Psoas muscle (tissue), 8 donors: ENCODE measurements at regions of chr17 and their contacts with region 1.

Region 1: DNA sequence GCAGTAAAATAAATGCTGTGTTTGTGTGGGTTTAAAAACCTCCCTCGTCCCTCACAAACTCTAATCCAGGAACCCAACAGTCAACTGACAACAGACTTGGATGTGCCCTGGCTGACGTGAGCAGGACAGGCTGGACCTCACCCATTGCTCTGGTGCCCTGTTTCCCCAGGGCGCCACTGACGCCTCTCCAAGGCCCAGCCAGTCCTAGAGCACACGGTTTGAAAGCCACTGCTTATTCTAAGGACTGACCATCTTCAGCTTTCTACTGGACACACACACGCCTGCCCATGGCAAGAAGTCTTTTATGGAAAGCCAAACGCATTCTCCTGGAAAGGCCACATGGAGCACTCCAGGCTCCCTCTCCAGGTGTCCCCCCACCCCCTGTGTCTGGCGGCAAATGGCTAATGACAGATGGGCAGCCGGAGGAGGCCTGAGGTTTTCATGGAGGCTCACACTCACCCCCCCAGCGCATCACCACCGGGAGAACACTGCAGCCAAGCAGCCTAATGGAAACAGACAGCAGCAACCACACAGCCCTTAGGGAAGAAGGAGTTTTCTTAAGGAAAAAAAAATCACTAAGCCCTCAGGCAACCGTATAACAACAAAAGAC is 319.2 kb downstream of the SOX9 start:
- DNase-seq: no peak
- ATAC-seq: no peak
- H3K4me3 ChIP-seq: no peak overlapping the region
- H3K27ac ChIP-seq: no peak overlapping the region
- H3K4me1 ChIP-seq: no peaks in the 10 kb centered on the region
- H3K27me3 ChIP-seq: no peaks in the 10 kb centered on the region
- CTCF ChIP-seq: no peak

Region 2: DNA sequence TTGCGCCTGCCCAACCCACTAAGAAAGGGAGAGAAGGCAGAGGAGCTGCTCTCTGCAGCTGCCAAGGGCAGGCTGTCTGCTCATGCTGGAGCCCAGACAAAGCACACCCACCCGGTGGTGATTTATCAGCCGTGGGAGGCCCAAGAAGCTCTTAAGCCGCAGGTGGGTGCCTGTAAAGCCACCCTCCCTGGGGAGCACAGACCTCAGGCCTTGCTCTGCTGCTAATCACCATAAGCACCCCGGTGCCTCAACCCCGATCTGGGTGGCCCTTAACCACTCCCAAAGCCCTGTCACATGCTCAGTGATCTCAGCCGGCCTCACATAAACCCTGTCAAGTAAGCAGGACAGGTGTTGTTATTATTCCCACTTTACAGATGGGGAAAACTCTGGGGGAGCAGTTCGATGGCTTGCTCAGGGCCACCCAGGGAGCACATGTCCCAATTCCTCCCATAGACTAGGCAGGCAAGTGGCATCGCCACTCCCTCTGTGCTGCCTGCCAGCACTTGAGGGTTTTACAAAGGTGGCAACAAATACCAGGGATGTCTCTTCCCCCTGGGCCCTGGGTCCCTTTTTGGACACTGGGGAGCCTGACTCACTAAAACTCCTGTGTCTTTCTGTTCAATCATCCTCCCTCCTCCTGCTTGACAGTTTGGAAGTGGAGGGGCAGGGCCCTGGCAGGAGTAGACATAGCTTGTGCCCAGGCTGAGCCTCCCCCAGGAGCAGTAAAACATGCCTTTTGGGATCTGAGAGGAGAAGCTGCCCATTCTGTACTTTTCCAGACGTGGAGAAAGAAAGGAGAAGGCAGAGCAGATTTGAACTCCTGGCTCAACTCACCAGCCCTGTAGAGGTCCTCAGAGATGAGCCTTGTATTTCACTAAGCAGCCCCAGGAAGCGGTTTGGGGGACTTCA is 19.9 kb before region 1 on chr17:
- intact Hi-C with region 1: no loop called
- DNase-seq: no peak
- ATAC-seq: no peak
- H3K4me3 ChIP-seq: no peak overlapping the region
- H3K27ac ChIP-seq: no peak overlapping the region
- H3K4me1 ChIP-seq: peaks cover 5% of the 10 kb centered on the region
- H3K27me3 ChIP-seq: no peaks in the 10 kb centered on the region
- CTCF ChIP-seq: no peak

Region 3: DNA sequence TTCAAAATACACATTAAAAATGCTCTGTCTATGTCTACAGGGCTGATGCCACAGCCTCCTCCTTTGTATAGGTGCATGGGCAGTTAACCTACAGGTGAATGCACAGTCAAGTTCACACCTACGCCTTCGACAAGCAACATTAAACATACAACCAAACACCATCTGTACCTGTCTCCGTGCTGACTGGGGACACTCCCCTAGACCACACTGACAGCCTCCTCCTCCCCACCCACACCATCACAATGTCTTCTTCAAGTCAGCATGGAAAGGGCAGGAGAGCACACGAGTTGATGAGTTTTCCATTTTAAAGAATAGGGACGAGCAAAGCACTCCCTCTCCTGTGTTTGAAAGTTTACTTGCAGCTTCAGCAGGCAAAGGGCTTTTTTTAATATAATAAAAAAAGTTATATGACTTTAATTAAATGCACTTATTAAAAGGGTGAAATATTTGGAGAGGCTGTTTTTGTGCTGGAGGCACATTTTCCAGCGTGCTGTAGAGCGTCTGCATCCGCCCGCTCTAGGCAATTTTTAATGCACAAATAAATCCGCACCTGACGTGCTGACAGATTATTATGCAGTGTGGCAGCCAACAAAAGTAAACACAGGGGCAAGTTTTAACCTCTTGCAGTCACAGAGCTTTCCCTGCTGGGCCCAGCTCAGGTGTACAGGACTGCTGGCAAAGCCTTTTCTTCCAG is 48.7 kb after region 1 on chr17:
- intact Hi-C with region 1: loop called in 1 of 2 experiments (anchors 5 kb)
- DNase-seq: no peak
- ATAC-seq: no peak
- H3K4me3 ChIP-seq: no peak overlapping the region
- H3K27ac ChIP-seq: no peak overlapping the region
- H3K4me1 ChIP-seq: no peaks in the 10 kb centered on the region
- H3K27me3 ChIP-seq: peaks cover 0 to 7% (median 0%) of the 10 kb centered on the region in 3 donors
- CTCF ChIP-seq: no peak

Region 4: GRCh38 chr17:72592242-72592966 is 152.4 kb after region 1 on chr17:
- intact Hi-C with region 1: no loop called
- DNase-seq: peak; percentile 32 to 68
- ATAC-seq: peak; percentile 65 to 91 (median 80)
- H3K4me3 ChIP-seq: peak overlapping the region; percentile 62
- H3K27ac ChIP-seq: no peak overlapping the region
- H3K4me1 ChIP-seq: peaks cover 11% of the 10 kb centered on the region
- H3K27me3 ChIP-seq: peaks cover 0 to 59% (median 13%) of the 10 kb centered on the region in 3 donors
- CTCF ChIP-seq: no peak

Region 5: GRCh38 chr17:72683506-72684404 is 243.8 kb after region 1 on chr17:
- intact Hi-C with region 1: no loop called
- DNase-seq: peak; percentile 17 to 58
- ATAC-seq: peak in 1 of 4 donors; percentile 40
- H3K4me3 ChIP-seq: no peak overlapping the region
- H3K27ac ChIP-seq: no peak overlapping the region
- H3K4me1 ChIP-seq: no peaks in the 10 kb centered on the region
- H3K27me3 ChIP-seq: peaks cover 0 to 2% (median 0%) of the 10 kb centered on the region in 3 donors
- CTCF ChIP-seq: no peak